Head of caudate nucleus (tissue), 42 donors: ENCODE measurements at regions of chr2 and their contacts with region 1.

Region 1: GRCh38 chr2:205885492-205886099 is 200.4 kb downstream of the INO80D start:
- DNase-seq: peak; percentile 71 to 96 (median 89)

Region 2: GRCh38 chr2:205660521-205661124 is 225.0 kb before region 1 on chr2:
- intact Hi-C with region 1: no loop called
- DNase-seq: peak in 5 of 42 donors; percentile 15 to 51 (median 25)

Region 3: DNA sequence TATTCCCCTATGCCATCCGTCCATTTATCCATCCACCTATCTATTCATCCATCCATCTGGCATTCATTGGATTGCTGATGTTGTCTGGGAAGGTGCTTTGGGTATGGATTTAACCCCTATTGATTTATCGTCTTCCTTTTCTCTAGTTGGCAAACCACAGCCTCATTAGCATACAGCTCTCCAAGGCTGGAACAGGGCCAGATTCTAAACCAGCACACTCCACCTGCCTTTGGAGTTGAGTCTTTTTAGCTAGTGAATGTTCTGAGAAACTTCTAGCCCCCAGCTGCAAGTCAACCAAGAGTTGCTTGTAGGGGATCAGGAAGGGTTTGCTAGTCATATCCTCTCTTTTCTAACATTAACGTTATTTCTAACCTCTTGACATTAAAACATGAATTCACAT is 112.6 kb before region 1 on chr2:
- intact Hi-C with region 1: loop called (anchors 5 kb)
- DNase-seq: no peak